ENCODE measurements at regions of chr12 and their contacts with region 1.

Region 1: GRCh38 chr12:47812797-47813510 is 6.7 kb downstream of the HDAC7 start:
- DNase-seq: peak; percentile 97
- H3K4me3 Mint-ChIP-seq: peak overlapping the region; percentile 88
- H3K27ac Mint-ChIP-seq: peak overlapping the region; percentile 99
- H3K4me1 Mint-ChIP-seq: peaks cover 81% of the 10 kb centered on the region
- H3K27me3 Mint-ChIP-seq: no peaks in the 10 kb centered on the region

Region 2: DNA sequence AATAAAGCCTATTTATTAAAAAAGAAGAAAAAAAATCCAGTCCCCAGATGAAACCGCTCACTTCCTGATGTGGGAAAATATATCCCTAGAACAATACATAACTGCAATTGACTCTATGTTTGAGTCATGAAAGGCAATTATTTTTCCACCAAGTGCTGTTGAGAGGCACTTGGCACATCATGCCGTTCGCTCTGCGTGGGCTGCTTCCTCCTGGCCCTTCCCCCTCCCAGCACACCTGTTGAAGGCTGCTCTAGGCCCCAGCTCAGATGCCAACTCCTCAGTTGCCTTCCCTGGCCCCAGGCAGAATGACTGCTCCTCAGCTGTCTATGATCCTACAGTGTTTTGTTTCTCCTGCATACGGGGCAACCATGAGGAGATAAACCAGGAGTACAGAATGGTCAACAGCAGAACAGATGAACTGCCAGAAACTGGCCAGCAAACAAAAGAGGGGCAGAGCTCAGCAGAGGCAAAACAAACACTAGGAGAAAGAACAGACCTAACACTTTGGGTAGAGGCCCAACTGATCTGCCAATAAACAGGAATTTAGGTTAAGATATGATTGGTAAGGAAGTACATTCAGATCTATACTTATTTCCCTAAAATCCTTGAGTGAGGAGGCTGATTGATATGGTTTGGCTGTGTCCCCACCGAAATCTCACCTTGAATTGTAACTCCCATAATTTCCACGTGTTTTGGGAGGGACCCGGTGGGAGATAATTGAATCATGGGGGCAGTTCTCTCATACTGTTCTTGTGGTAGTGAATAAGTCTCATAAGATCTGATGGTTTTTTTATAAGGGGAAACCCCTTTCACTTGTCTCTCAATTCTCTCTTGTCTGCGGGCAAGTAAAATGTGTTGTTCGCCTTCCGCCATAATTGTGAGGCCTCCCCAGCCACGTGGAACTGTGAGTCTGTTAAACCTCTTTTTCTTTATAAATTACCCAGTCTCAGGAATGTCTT is 1602.8 kb before region 1 on chr12:
- intact Hi-C with region 1: loop called (anchors 10 kb)
- DNase-seq: peak; percentile 79
- H3K4me3 Mint-ChIP-seq: peak overlapping the region; percentile 65
- H3K27ac Mint-ChIP-seq: peak overlapping the region; percentile 94
- H3K4me1 Mint-ChIP-seq: peaks cover 69% of the 10 kb centered on the region
- H3K27me3 Mint-ChIP-seq: no peaks in the 10 kb centered on the region

Region 3: DNA sequence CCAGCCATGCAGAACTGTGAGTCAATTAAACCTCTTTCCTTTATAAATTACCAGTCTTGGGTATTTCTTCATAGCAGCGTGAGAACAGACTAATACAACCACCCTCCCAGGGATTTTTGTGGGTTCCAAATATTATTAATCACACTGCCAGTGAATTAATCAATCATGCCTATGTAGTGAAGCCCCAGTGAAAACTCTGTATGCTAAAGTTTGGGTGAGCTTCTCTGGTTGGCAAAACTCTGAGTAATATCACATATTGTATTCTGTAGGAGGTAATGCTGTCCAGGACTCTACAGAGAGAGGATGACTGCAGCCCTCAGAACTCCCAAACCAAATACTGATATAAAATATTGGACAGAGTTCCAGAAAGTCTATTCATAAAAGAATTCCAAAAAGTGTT is 324.1 kb before region 1 on chr12:
- intact Hi-C with region 1: no loop called
- DNase-seq: no peak
- H3K4me3 Mint-ChIP-seq: no peak overlapping the region
- H3K27ac Mint-ChIP-seq: no peak overlapping the region
- H3K4me1 Mint-ChIP-seq: peaks cover 3% of the 10 kb centered on the region
- H3K27me3 Mint-ChIP-seq: peaks cover 2% of the 10 kb centered on the region

Region 4: DNA sequence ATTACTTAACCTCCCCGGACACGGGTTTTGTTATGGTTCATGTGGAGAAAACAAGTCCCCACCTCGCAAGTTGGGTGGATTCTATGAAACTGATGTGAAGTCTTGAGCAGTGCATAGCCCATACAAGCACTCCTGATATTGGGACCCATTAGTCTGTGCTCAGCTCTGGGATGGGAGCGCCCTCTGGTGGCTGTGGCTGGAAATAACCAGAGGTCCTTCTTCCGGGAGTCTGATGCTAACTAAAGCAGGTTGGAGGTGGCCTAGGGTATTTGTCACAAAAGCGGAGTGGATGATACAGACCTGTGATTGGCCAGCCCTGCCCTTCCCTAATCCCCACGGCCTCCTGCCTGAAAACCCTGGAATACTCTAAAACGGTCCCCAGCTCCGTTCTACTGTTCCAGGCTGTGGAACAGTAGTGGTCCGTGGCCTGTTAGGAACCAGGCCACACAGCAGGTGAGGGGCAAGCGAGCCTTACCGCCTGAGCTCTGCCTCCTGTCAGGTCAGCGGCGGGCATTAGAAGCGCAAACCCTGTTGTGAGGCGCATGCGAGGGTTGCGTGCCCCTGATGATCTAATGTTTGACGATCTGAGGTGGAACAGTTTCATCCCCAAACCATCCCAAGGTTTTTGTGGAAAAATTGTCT is 33.5 kb before region 1 on chr12:
- intact Hi-C with region 1: no loop called
- DNase-seq: peak; percentile 97
- H3K4me3 Mint-ChIP-seq: no peak overlapping the region
- H3K27ac Mint-ChIP-seq: peak overlapping the region; percentile 64
- H3K4me1 Mint-ChIP-seq: peaks cover 43% of the 10 kb centered on the region
- H3K27me3 Mint-ChIP-seq: no peaks in the 10 kb centered on the region

Region 5: GRCh38 chr12:47789712-47790489 is 23.1 kb before region 1 on chr12:
- intact Hi-C with region 1: no loop called
- DNase-seq: no peak
- H3K4me3 Mint-ChIP-seq: no peak overlapping the region
- H3K27ac Mint-ChIP-seq: no peak overlapping the region
- H3K4me1 Mint-ChIP-seq: peaks cover 11% of the 10 kb centered on the region
- H3K27me3 Mint-ChIP-seq: no peaks in the 10 kb centered on the region

Region 6: DNA sequence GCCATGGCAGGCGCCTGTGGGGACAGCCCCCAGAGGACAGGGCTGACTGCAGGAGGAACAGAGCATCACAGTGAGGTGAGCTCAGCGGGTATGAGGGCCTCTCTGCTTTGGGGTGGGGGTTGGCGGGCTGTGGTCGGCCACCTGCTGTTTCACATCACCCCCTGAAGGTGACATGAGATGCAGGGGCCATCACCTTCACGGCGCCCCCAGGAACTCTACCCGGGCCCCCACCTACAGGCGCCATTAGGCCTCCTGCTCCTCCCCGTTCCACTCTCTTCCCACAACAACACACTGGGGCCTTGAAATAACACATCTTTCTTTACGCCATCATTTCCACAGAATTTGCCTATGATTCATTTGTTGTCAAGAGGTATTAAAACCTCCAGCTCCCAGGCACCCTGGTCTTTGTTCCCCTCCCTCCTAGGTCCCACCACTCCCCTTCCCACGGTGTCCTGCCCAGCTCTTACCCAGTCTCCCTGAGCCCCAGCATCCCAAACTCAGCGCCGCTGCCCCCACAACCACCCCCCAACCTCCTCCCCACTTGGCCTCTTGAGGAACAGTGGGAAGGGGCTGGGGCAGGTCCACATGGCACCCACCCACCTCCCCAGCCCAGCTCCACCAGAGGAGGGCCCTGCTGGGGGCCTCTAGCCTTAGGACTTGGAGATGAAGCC is 19.4 kb after region 1 on chr12:
- intact Hi-C with region 1: loop called (anchors 1 kb)
- DNase-seq: peak; percentile 80
- H3K4me3 Mint-ChIP-seq: peak overlapping the region; percentile 79
- H3K27ac Mint-ChIP-seq: peak overlapping the region; percentile 99
- H3K4me1 Mint-ChIP-seq: peaks cover 86% of the 10 kb centered on the region
- H3K27me3 Mint-ChIP-seq: no peaks in the 10 kb centered on the region

Measured in activated CD4-positive, alpha-beta T cell treated with anti-CD3 and anti-CD28 coated beads, Interleukin-2, amount 10 ng/mL, durations not matched to agents 24 days and 14 days (primary cell).